SK-N-SH (cell line): ENCODE measurements at regions of chr9 and their contacts with region 1.

Region 1: DNA sequence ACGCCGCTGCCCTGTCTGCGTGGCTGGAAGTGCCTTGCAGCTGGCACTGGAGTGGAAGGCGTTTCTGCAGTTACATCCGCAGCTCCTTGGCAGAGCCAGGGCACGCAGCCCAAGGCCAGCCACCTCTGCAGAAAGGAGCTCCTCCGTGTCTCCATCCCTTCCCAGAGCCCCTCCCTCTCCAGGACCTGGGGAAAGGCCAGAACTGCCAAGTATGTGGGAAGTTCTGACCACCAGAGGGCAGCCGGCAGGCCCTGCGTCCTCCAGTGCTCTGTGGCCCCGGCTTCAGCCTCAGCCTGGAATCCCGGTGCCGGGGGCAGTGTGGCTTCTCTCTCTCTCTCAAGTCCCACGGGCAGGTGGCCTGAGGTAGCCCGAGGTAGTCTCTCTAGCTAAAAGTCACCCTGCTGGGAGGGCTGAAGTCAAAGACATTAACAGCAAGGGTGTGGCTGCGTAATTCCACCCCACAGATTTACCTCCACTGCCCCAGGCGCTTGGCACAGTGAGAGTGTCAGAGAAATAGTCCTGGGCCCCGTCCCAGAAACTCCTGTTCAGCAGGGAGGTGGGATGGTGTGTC is 101.7 kb upstream of the FCN2 start:
- DNase-seq: peak; percentile 84
- H3K4me3 ChIP-seq: no peak overlapping the region
- H3K27ac ChIP-seq: no peak overlapping the region
- H3K4me1 ChIP-seq: peaks cover 0 to 13% of the 10 kb centered on the region in 2 experiments; a peak in 1 of 4 replicates
- H3K27me3 ChIP-seq: no peaks in the 10 kb centered on the region
- CTCF ChIP-seq: peak; percentile 58
- EP300 ChIP-seq: no peak
- RAD21 ChIP-seq: peak; percentile 63

Region 2: GRCh38 chr9:134760750-134761420 is 18.0 kb before region 1 on chr9:
- CTCF ChIA-PET with region 1: interaction called, 67 read pairs
- POLR2A ChIA-PET with region 1: no interaction called
- DNase-seq: no peak
- H3K4me3 ChIP-seq: no peak overlapping the region
- H3K27ac ChIP-seq: no peak overlapping the region
- H3K4me1 ChIP-seq: no peaks in the 10 kb centered on the region
- H3K27me3 ChIP-seq: no peaks in the 10 kb centered on the region
- CTCF ChIP-seq: no peak
- EP300 ChIP-seq: no peak
- RAD21 ChIP-seq: no peak

Region 3: GRCh38 chr9:134768709-134769351 is 10.1 kb before region 1 on chr9:
- CTCF ChIA-PET with region 1: interaction called, 67 read pairs
- POLR2A ChIA-PET with region 1: no interaction called
- DNase-seq: peak; percentile 60
- H3K4me3 ChIP-seq: no peak overlapping the region
- H3K27ac ChIP-seq: no peak overlapping the region
- H3K4me1 ChIP-seq: peaks cover 0 to 21% of the 10 kb centered on the region in 2 experiments; a peak in 1 of 4 replicates
- H3K27me3 ChIP-seq: no peaks in the 10 kb centered on the region
- CTCF ChIP-seq: no peak
- EP300 ChIP-seq: no peak
- RAD21 ChIP-seq: no peak

Region 4: DNA sequence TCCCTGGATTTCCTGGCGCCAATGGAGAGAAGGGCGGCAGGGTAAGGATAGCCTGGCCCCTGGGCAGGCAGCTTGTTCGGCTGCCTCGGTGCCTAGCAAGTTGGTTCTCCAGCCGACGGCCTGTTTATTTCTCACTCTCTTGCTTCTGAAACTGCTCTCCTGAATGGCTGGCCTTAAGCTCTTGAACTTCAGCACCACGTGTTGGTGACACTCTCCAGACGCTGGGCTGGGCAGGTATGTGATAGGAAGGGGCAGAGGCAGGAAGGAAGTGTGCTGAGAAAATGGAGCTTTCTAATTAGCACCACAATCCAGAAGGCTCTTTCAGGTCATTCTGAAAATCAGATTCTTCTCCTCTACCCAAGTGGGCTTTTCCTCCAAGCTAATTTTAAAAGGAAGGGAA is 10.2 kb after region 1 on chr9:
- CTCF ChIA-PET with region 1: interaction called, 67 read pairs
- POLR2A ChIA-PET with region 1: no interaction called
- DNase-seq: no peak
- H3K4me3 ChIP-seq: no peak overlapping the region
- H3K27ac ChIP-seq: no peak overlapping the region
- H3K4me1 ChIP-seq: no peaks in the 10 kb centered on the region; a peak in 1 of 4 replicates
- H3K27me3 ChIP-seq: no peaks in the 10 kb centered on the region
- CTCF ChIP-seq: no peak
- EP300 ChIP-seq: no peak
- RAD21 ChIP-seq: no peak